ENCODE measurements at regions of chr16 and their contacts with region 1.

Region 1: DNA sequence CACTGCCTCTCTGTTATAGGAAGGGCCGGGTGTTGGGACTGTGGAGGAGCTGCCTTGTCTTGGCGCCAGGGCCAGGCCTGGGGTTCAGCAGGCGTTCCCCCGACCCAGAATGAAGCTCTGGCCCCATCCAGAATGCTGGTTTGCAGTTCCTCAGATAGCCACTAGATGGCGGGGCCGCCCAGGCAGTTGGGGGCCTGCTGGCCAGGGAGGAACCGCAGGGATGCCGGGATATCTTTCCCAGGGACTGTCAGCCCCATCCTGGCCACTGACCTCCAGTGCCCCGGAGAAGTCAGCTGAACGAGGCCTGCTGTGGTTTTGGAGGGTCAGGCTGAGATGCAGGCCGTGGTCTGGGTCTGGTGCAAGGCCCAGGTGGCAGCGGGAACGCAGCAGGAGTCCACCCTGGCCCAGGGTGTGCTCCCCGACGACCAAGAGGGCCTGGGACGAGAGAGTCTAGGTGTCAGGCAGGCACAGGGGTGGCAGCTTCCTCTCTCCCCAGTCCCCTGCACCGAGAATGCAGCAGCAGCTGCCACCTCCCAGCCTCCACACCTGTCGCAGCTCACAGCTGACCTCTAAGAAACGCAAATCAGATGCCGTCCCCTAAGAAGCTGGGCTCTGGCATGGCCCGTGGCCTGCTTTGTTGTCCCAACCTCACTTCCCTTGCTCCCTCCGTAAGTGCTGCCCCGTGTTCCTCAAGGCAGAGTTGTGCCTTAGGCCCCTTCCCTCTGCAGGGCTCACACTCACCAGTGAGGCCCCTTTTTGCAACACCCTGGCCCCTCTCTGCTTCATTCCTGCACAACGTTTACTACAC is 51.2 kb downstream of the RMI2 start:
- ATAC-seq: peak; percentile 90 to 97 (median 92)
- H3K4me3 ChIP-seq: no peak overlapping the region
- H3K27ac ChIP-seq: no peak overlapping the region
- H3K4me1 ChIP-seq: peaks cover 6 to 7% of the 10 kb centered on the region in 2 donors

Region 2: DNA sequence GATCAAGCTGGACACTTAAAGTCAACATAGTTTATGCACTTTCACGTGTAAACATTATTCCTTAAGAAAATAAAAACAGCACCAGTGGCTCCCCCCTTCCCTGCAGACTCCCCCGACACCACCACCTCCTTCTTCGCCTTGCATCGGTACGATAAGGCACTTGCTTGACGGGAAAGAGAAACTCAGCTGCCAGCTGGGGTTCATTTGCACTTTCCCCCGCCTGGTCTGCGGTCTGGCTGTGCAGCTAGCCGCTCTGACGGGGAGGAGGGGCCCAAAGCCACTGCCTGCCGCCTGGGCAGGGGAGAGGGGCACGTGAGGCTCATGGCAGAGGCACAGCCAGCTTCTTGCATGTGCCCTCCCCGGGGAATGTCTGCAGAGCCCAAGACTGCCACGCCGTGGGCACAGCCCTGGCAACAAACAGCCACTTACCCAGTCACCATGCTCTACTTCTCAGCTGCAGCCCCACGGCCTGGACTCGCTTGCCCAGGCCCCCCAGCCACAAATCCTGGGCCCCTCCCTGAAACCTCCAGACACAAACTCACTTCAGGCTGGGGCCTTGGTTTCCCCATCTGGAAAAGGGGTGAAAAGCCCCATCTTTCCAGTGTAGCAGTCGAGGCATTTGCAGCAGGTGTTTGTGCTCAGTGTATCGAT is 98.8 kb before region 1 on chr16:
- in situ Hi-C with region 1: no loop called
- ATAC-seq: peak; percentile 87 to 98 (median 96)
- H3K4me3 ChIP-seq: no peak overlapping the region
- H3K27ac ChIP-seq: no peak overlapping the region
- H3K4me1 ChIP-seq: peaks cover 4 to 11% of the 10 kb centered on the region in 2 donors

Region 3: DNA sequence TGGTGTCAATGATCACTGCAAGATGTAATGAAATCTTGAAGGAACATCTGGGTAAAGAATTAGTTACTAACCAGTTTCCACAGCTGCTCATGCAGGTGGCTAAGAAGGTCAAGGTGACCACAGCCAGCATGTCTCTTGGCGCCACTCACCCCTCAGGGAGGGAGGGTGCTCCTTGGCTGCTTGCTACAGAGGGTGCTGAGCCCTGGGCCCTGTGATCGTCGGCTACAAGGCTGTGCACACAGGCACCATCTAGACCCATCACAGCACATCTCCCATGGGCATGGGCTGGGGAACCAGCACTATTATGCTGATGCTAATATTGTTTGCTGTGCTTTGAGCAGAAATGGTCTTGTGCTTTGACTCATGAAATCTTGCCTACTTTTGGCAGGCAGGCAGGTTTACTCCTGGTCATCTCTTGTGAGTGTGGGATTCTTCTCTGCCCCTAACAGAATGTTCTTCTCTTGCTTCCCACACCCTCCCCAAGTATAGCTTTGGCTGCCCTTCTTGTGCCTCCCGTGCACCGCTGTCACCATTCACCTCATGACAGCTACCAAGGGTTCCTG is 309.8 kb after region 1 on chr16:
- in situ Hi-C with region 1: loop called in 3 of 9 experiments (anchors 10 to 25 kb)
- ATAC-seq: peak in 3 of 8 experiments; percentile 25 to 70 (median 29)
- H3K4me3 ChIP-seq: no peak overlapping the region
- H3K27ac ChIP-seq: no peak overlapping the region
- H3K4me1 ChIP-seq: no peaks in the 10 kb centered on the region

Region 4: GRCh38 chr16:11715246-11715947 is 319.0 kb after region 1 on chr16:
- in situ Hi-C with region 1: loop called in 3 of 9 experiments (anchors 10 to 25 kb)
- ATAC-seq: no peak
- H3K4me3 ChIP-seq: no peak overlapping the region
- H3K27ac ChIP-seq: no peak overlapping the region
- H3K4me1 ChIP-seq: no peaks in the 10 kb centered on the region

Region 5: GRCh38 chr16:11799509-11800381 is 403.3 kb after region 1 on chr16:
- in situ Hi-C with region 1: loop called in 2 of 9 experiments (anchors 25 kb)
- ATAC-seq: no peak
- H3K4me3 ChIP-seq: no peak overlapping the region
- H3K27ac ChIP-seq: no peak overlapping the region
- H3K4me1 ChIP-seq: peaks cover 19 to 20% of the 10 kb centered on the region in 2 donors

Region 6: GRCh38 chr16:12067714-12068401 is 671.4 kb after region 1 on chr16:
- in situ Hi-C with region 1: loop called in 2 of 9 experiments (anchors 25 kb)
- ATAC-seq: peak; percentile 65 to 94 (median 76)
- H3K4me3 ChIP-seq: no peak overlapping the region
- H3K27ac ChIP-seq: no peak overlapping the region
- H3K4me1 ChIP-seq: no peaks in the 10 kb centered on the region

Measured in motor neuron (in vitro differentiated cells).